HepG2 (cell line): ENCODE measurements at regions of chr15 and their contacts with region 1.

Region 1: GRCh38 chr15:76336254-76337058 is at the start of gene ISL2:
- DNase-seq: peak; percentile 95
- ATAC-seq: peak; percentile 73
- H3K4me3 ChIP-seq: peak within 1 kb of the TSS; percentile 77 to 93 (median 93)
- H3K27ac ChIP-seq: peak within 1 kb of the TSS; percentile 86
- H3K4me1 ChIP-seq: peaks cover 48% of the 10 kb centered on the region
- H3K27me3 ChIP-seq: no peaks in the 10 kb centered on the region; a peak in 1 of 5 replicates
- CTCF ChIP-seq: peak; percentile 2; the same call in 1 of the 2 replicates
- EP300 ChIP-seq: peak in 1 of 2 experiments; percentile 38; a peak in 1 of 4 replicates
- POLR2A ChIP-seq: peak; percentile 86
- RAD21 ChIP-seq: no peak
- total RNA-seq, gene ISL2: 2.5 and 5.1 TPM in 2 replicates

Region 2: GRCh38 chr15:76185716-76186115 is 150.7 kb before region 1 on chr15:
- CTCF ChIA-PET with region 1: interaction called, 4 read pairs
- POLR2A ChIA-PET with region 1: interaction called, 12 read pairs
- in situ Hi-C with region 1: loop called (anchors 5 kb)
- intact Hi-C with region 1: loop called (anchors 5 kb)
- DNase-seq: peak; percentile 72
- ATAC-seq: peak; percentile 72
- H3K4me3 ChIP-seq: no peak overlapping the region
- H3K27ac ChIP-seq: no peak overlapping the region
- H3K4me1 ChIP-seq: peaks cover 24% of the 10 kb centered on the region
- H3K27me3 ChIP-seq: peaks cover 3 to 31% of the 10 kb centered on the region in 2 experiments; a peak in 4 of 5 replicates
- CTCF ChIP-seq: peak; percentile 74
- EP300 ChIP-seq: no peak
- POLR2A ChIP-seq: no peak
- RAD21 ChIP-seq: peak; percentile 54

Region 3: DNA sequence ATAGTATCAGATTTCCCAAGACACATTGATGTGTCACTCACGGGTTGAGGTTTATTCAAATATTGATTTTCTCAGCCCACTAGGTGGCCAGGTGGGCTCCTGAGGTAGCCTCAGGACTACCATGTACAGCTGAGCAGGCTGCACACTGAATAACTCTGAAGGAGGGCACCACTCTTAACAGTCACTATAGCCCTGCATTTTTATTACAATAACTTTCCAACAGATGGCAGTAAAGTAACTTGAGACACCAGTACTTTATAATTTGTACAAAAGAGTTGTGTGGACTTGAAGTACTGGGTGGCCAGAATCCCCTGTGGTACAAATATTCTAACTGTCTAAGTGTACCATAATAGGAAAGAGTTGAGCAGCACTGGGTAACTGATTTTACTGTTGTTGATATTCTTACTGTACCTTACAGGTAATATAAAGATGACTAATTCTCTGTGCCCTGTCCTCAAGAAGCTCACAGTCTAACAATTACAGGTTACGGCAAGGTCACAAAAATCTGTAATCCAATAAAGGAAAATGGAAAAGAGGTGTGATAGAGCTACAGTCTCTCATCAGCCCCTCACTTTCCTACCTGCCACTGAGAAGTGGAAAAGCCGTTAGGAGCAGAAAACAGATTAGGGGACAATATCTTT is 101.2 kb before region 1 on chr15:
- CTCF ChIA-PET with region 1: no interaction called
- POLR2A ChIA-PET with region 1: interaction called, 14 read pairs
- in situ Hi-C with region 1: loop called (anchors 5 kb)
- intact Hi-C with region 1: loop called (anchors 5 kb)
- DNase-seq: peak; percentile 42
- ATAC-seq: peak; percentile 90
- H3K4me3 ChIP-seq: no peak overlapping the region
- H3K27ac ChIP-seq: peak overlapping the region; percentile 35
- H3K4me1 ChIP-seq: peaks cover 51% of the 10 kb centered on the region
- H3K27me3 ChIP-seq: no peaks in the 10 kb centered on the region
- CTCF ChIP-seq: peak; percentile 53
- EP300 ChIP-seq: no peak
- POLR2A ChIP-seq: no peak
- RAD21 ChIP-seq: peak; percentile 32; the same call in 1 of the 2 replicates

Region 4: GRCh38 chr15:76299786-76300185 is 36.7 kb before region 1 on chr15:
- CTCF ChIA-PET with region 1: no interaction called
- POLR2A ChIA-PET with region 1: no interaction called
- in situ Hi-C with region 1: no loop called
- intact Hi-C with region 1: loop called (anchors 5 kb)
- DNase-seq: no peak
- ATAC-seq: no peak
- H3K4me3 ChIP-seq: no peak overlapping the region
- H3K27ac ChIP-seq: no peak overlapping the region
- H3K4me1 ChIP-seq: peaks cover 25% of the 10 kb centered on the region
- H3K27me3 ChIP-seq: no peaks in the 10 kb centered on the region
- CTCF ChIP-seq: no peak
- EP300 ChIP-seq: no peak
- POLR2A ChIP-seq: no peak
- RAD21 ChIP-seq: no peak

Region 5: GRCh38 chr15:76866716-76867321 is 530.4 kb after region 1 on chr15:
- CTCF ChIA-PET with region 1: no interaction called
- POLR2A ChIA-PET with region 1: no interaction called
- in situ Hi-C with region 1: no loop called
- intact Hi-C with region 1: loop called (anchors 5 kb)
- DNase-seq: peak; percentile 34
- ATAC-seq: no peak
- H3K4me3 ChIP-seq: no peak overlapping the region
- H3K27ac ChIP-seq: no peak overlapping the region
- H3K4me1 ChIP-seq: no peaks in the 10 kb centered on the region
- H3K27me3 ChIP-seq: no peaks in the 10 kb centered on the region
- CTCF ChIP-seq: peak; percentile 51
- EP300 ChIP-seq: no peak
- POLR2A ChIP-seq: no peak
- RAD21 ChIP-seq: peak; percentile 43; the same call in 1 of the 2 replicates